ENCODE measurements at regions of chr1 and their contacts with region 1.

Region 1: GRCh38 chr1:183331091-183331742 is 87.0 kb downstream of the NMNAT2 start:
- DNase-seq: no peak
- H3K4me3 ChIP-seq: no peak overlapping the region
- H3K27ac ChIP-seq: no peak overlapping the region
- H3K4me1 ChIP-seq: peaks cover 8% of the 10 kb centered on the region
- H3K27me3 ChIP-seq: no peaks in the 10 kb centered on the region
- CTCF ChIP-seq: no peak
- POLR2A ChIP-seq: no peak

Region 2: GRCh38 chr1:183318433-183318832 is 12.8 kb before region 1 on chr1:
- intact Hi-C with region 1: loop called (anchors 1 kb)
- DNase-seq: peak in 1 of 2 donors; percentile 97
- H3K4me3 ChIP-seq: no peak overlapping the region
- H3K27ac ChIP-seq: peak overlapping the region; percentile 89
- H3K4me1 ChIP-seq: peaks cover 22% of the 10 kb centered on the region
- H3K27me3 ChIP-seq: no peaks in the 10 kb centered on the region
- CTCF ChIP-seq: peak; percentile 39 to 65 (median 64)
- POLR2A ChIP-seq: no peak

Measured in vagina (tissue), 2 donors.